Dendritic cell treated with granulocyte-macrophage colony-stimulating factor and Interleukin-4, amounts not matched to agents 40 ng/mL and 50 ng/mL, for 4 days (primary cell): ENCODE measurements at regions of chr5 and their contacts with region 1.

Region 1: DNA sequence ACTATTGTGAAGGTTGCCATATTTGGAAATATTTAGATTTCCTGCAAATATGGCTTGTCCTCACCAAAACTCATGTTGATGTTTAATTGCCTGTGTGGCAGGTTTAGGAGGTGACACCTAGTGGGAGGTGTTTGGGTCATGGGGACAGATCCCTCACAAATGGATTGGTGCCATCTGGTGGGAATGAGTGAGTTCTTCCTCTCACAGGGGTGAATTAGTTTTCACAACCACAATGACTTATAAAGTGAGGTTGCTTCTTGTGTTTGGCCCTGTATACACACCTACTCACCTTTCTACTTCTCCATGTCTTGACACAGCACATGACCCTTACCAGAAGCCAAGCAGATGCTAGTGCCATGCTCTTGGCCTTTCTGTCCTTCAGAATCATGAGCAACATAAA is 41.1 kb downstream of the ISOC1 start:
- H3K4me3 Mint-ChIP-seq: no peak overlapping the region
- H3K27ac Mint-ChIP-seq: no peak overlapping the region
- H3K4me1 Mint-ChIP-seq: peaks cover 3% of the 10 kb centered on the region
- H3K27me3 Mint-ChIP-seq: no peaks in the 10 kb centered on the region

Region 2: GRCh38 chr5:128905571-128906110 is 230.0 kb before region 1 on chr5:
- intact Hi-C with region 1: loop called (anchors 2 kb)
- H3K4me3 Mint-ChIP-seq: no peak overlapping the region
- H3K27ac Mint-ChIP-seq: no peak overlapping the region
- H3K4me1 Mint-ChIP-seq: no peaks in the 10 kb centered on the region
- H3K27me3 Mint-ChIP-seq: peaks cover 2% of the 10 kb centered on the region